Calu3 (cell line): ENCODE measurements at regions of chr19 and their contacts with region 1.

Region 1: GRCh38 chr19:33235269-33235995 is 9.8 kb upstream of the SLC7A10 start:
- DNase-seq: peak; percentile 91
- H3K4me3 Mint-ChIP-seq: no peak overlapping the region
- H3K27ac Mint-ChIP-seq: no peak overlapping the region
- H3K4me1 Mint-ChIP-seq: no peaks in the 10 kb centered on the region
- H3K27me3 Mint-ChIP-seq: peaks cover 38% of the 10 kb centered on the region
- CTCF ChIP-seq: peak; percentile 93

Region 2: GRCh38 chr19:33143897-33144405 is 91.5 kb before region 1 on chr19:
- CTCF ChIA-PET with region 1: no interaction called
- intact Hi-C with region 1: loop called (anchors 1 kb)
- DNase-seq: peak; percentile 71
- H3K4me3 Mint-ChIP-seq: peak overlapping the region; percentile 4
- H3K27ac Mint-ChIP-seq: no peak overlapping the region
- H3K4me1 Mint-ChIP-seq: peaks cover 7% of the 10 kb centered on the region
- H3K27me3 Mint-ChIP-seq: peaks cover 48% of the 10 kb centered on the region
- CTCF ChIP-seq: peak; percentile 96

Region 3: GRCh38 chr19:33217881-33218280 is 17.6 kb before region 1 on chr19:
- CTCF ChIA-PET with region 1: no interaction called
- intact Hi-C with region 1: no loop called
- DNase-seq: no peak
- H3K4me3 Mint-ChIP-seq: no peak overlapping the region
- H3K27ac Mint-ChIP-seq: no peak overlapping the region
- H3K4me1 Mint-ChIP-seq: peaks cover 8% of the 10 kb centered on the region
- H3K27me3 Mint-ChIP-seq: peaks cover 73% of the 10 kb centered on the region
- CTCF ChIP-seq: no peak

Region 4: GRCh38 chr19:33292595-33293441 is 57.4 kb after region 1 on chr19:
- CTCF ChIA-PET with region 1: interaction called, 11 read pairs
- intact Hi-C with region 1: no loop called
- DNase-seq: no peak
- H3K4me3 Mint-ChIP-seq: no peak overlapping the region
- H3K27ac Mint-ChIP-seq: no peak overlapping the region
- H3K4me1 Mint-ChIP-seq: peaks cover 13% of the 10 kb centered on the region
- H3K27me3 Mint-ChIP-seq: peaks cover 42% of the 10 kb centered on the region
- CTCF ChIP-seq: no peak

Region 5: GRCh38 chr19:33302175-33302973 is 66.9 kb after region 1 on chr19 and contains the start of gene CEBPA:
- CTCF ChIA-PET with region 1: interaction called, 3 read pairs
- intact Hi-C with region 1: loop called (anchors 5 kb)
- DNase-seq: peak; percentile 88
- H3K4me3 Mint-ChIP-seq: peak within 1 kb of the TSS; percentile 76
- H3K27ac Mint-ChIP-seq: no peak within 1 kb of the TSS
- H3K4me1 Mint-ChIP-seq: peaks cover 14% of the 10 kb centered on the region
- H3K27me3 Mint-ChIP-seq: peaks cover 73% of the 10 kb centered on the region
- CTCF ChIP-seq: peak; percentile 38
- total RNA-seq, gene CEBPA: 1.2 and 1.8 TPM in 2 replicates

Region 6: GRCh38 chr19:33311326-33311682 is 75.9 kb after region 1 on chr19:
- CTCF ChIA-PET with region 1: interaction called, 3 read pairs
- intact Hi-C with region 1: loop called (anchors 2 kb)
- DNase-seq: peak; percentile 76
- H3K4me3 Mint-ChIP-seq: no peak overlapping the region
- H3K27ac Mint-ChIP-seq: no peak overlapping the region
- H3K4me1 Mint-ChIP-seq: peaks cover 10% of the 10 kb centered on the region
- H3K27me3 Mint-ChIP-seq: peaks cover 57% of the 10 kb centered on the region
- CTCF ChIP-seq: peak; percentile 65

Region 7: DNA sequence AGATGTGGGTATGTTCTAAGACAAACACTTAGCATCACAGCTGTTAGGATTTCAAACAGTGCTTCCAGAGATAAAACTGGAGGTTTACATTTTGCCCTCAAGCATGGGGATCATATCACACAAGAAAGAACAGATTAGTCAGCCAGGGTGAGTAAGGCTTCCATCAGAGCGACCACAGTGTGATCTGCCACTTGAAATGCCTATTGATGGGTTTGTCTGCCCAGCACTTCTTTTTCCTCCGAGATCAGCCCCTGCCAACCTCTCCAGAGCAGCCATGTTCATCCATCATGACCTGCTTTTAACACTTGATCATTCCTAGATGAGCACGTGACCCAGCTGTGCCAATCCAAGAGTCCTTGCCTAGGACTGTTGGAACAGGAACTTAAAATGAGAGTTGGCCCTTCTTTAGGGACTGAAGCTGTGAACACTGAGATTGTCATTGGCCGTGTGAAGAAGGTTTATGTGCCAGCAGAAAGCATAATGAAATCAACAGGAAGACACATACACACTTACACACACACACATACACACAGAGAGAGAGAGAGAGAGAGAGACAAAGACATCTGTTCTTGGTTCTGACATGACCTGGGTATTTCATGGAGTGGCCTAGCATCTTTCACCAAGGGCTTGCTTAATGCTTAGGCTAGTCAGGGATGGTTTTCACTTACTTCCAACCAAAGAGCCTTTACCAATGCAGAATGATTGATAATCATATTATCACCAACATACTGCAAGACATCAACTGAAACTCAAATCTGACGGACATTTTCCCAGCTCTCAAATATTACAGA is 132.8 kb after region 1 on chr19:
- CTCF ChIA-PET with region 1: no interaction called
- intact Hi-C with region 1: no loop called
- DNase-seq: no peak
- H3K4me3 Mint-ChIP-seq: no peak overlapping the region
- H3K27ac Mint-ChIP-seq: no peak overlapping the region
- H3K4me1 Mint-ChIP-seq: no peaks in the 10 kb centered on the region
- H3K27me3 Mint-ChIP-seq: peaks cover 58% of the 10 kb centered on the region
- CTCF ChIP-seq: no peak

Region 8: GRCh38 chr19:33399745-33400681 is 164.6 kb after region 1 on chr19:
- CTCF ChIA-PET with region 1: interaction called, 10 read pairs
- intact Hi-C with region 1: no loop called
- DNase-seq: no peak
- H3K4me3 Mint-ChIP-seq: no peak overlapping the region
- H3K27ac Mint-ChIP-seq: no peak overlapping the region
- H3K4me1 Mint-ChIP-seq: no peaks in the 10 kb centered on the region
- H3K27me3 Mint-ChIP-seq: no peaks in the 10 kb centered on the region
- CTCF ChIP-seq: no peak

Region 9: DNA sequence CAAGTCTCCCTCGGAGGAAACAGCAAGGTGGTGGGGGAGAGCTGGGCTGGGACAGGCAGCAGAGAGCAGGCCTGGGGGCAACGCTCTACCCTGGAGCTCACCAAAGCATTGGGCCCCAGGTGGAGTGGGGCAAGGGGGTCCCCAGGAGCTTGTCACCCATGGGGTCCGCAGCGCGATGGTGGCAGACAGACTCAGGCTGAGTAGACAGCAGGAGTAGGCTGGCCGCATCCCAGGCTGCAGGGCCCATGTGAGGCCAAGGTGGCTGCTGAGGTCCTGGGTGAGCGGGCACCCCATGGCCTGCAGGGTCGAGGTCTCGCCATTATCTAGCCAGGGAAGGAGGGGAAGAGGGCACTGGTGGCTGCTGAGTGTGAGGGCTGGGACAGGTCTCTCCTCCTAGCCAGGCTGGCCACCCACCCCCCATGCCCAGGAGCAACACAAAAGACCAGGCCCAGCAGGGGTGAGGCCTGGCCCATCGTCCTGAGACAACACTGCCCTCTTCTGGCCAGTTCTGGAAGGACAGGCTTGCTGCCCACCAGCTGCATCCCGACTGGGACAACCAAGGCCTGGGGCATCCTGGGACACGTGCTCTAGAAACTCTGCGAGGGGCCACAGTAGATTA is 171.2 kb after region 1 on chr19:
- CTCF ChIA-PET with region 1: interaction called, 12 read pairs
- intact Hi-C with region 1: loop called (anchors 2 kb)
- DNase-seq: peak; percentile 87
- H3K4me3 Mint-ChIP-seq: no peak overlapping the region
- H3K27ac Mint-ChIP-seq: no peak overlapping the region
- H3K4me1 Mint-ChIP-seq: no peaks in the 10 kb centered on the region
- H3K27me3 Mint-ChIP-seq: no peaks in the 10 kb centered on the region
- CTCF ChIP-seq: peak; percentile 97